ENCODE measurements at regions of chr5 and their contacts with region 1.

Region 1: DNA sequence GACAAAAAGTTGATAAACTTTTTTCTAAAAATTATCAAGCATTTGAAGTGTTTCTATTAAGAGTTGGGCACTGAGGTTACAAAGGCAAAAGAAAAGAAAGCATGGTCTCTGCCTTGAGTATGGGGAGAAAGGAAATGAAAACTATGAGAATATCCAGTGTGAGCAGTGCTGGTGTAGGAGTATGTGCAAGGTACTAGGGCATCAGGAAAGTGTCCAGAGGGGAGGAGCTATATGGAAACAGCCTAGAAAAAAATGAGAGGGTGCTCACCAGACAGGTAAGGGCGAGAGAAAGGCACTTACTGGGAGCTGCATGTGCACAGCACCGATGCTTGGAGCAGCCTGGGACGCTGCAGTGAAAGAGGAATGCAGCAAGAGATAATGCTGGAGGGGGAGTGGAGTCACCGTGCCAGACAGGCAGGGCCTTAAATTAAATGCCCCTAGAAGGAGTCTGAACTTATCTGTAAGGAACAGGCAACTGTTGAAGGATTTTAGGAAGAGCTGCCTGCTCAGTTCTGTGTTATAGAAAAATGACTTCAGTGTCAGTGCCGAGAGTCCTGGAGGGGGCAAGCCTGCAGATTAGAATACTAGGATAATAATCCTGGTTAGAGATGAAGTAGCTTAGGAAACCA is 14.0 kb downstream of the MCC start:
- DNase-seq: peak; percentile 4
- H3K4me3 ChIP-seq: peak overlapping the region; percentile 9
- H3K27ac ChIP-seq: peak overlapping the region; percentile 50
- H3K4me1 ChIP-seq: peaks cover 24% of the 10 kb centered on the region
- CTCF ChIP-seq: no peak

Region 2: GRCh38 chr5:113463032-113463431 is 11.2 kb before region 1 on chr5:
- CTCF ChIA-PET with region 1: interaction called, 3 read pairs
- POLR2A ChIA-PET with region 1: interaction called, 22 read pairs
- intact Hi-C with region 1: no loop called
- DNase-seq: no peak
- H3K4me3 ChIP-seq: no peak overlapping the region
- H3K27ac ChIP-seq: no peak overlapping the region
- H3K4me1 ChIP-seq: no peaks in the 10 kb centered on the region
- CTCF ChIP-seq: no peak

Region 3: GRCh38 chr5:115472271-115473025 is 1998.2 kb after region 1 on chr5:
- CTCF ChIA-PET with region 1: no interaction called
- POLR2A ChIA-PET with region 1: no interaction called
- intact Hi-C with region 1: no loop called
- DNase-seq: no peak
- H3K4me3 ChIP-seq: no peak overlapping the region
- H3K27ac ChIP-seq: no peak overlapping the region
- H3K4me1 ChIP-seq: no peaks in the 10 kb centered on the region
- CTCF ChIP-seq: no peak